ENCODE measurements at regions of chr12 and their contacts with region 1.

Region 1: DNA sequence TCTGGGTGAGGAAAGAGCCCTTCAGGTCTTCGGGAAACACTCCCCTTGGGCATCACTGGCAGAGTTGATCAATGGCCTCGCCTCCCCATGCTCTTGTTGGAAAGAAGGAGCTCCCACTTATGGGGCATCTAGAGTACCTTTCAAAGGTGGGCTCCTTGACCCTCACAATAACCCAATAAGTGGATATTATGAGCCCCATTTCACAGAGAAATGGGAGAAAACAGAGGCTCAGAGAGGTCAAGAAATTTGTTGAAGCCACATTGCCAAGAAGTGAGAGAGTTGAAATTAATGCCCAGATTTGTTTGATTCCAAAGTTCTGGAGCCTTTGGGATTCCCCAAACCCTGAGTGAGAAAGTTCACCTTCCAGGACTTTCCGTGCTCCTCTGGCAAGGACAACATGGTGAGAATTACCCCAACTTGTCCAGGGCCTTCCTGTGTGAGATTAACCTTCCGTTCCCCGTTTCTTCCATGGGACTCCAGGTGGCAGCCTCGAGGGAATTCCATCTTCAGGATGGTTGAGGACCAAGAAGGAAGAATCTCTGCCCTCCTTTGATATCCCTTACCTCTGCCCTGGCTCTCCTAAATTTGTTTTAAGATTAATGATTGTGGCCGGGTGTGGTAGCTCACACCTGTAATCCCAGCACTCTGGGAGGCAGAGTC is 7.5 kb upstream of the CHD4 start:
- DNase-seq: no peak
- H3K4me3 ChIP-seq: no peak overlapping the region
- CTCF ChIP-seq: no peak
- POLR2A ChIP-seq: no peak

Region 2: DNA sequence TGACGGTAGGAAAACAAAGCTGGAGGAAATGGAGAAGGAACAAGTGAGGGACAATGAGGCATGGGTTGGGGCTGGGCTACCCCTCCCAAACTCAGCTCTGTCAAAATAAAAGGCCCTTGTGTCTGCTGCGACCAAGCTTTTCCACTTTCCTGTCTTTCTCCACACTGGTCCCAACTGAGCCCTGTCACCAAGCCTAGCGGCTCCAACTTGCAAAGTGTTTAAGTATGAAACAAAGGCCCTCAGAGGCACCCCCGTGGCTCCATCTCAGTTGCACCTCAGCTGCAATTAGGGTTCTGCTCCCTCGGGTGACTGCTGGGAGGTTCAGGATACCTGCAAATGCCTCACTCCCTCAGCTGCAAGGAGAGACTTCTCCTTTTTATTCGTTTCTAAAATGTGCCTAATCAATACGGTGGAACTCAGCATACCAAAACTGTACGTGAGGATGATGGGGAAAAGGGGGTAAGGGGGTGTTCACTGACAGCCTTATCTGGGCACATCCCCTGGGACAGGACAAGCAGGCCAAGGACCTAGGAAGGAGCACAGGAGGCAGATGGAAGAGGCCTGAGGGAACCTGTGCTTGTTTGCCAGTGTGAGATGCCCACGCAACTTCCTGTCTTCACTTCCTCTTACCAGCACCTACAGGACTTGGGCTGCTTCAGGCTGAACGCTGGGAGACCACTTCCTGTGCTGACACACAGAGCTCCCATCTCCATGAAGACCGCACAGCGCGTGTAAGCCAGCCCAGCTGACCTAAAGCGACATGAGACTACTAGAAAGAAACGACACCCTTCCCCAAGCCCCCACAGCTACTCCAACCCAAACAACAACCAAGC is 153.0 kb before region 1 on chr12:
- intact Hi-C with region 1: no loop called
- DNase-seq: peak; percentile 49 to 87
- H3K4me3 ChIP-seq: no peak overlapping the region
- CTCF ChIP-seq: no peak
- POLR2A ChIP-seq: no peak

Region 3: GRCh38 chr12:6507102-6507998 is 107.3 kb before region 1 on chr12:
- intact Hi-C with region 1: no loop called
- DNase-seq: no peak
- H3K4me3 ChIP-seq: no peak overlapping the region
- CTCF ChIP-seq: no peak
- POLR2A ChIP-seq: no peak

Region 4: GRCh38 chr12:6825398-6826124 is 210.9 kb after region 1 on chr12:
- intact Hi-C with region 1: loop called (anchors 5 kb)
- DNase-seq: peak; percentile 80 to 97
- H3K4me3 ChIP-seq: no peak overlapping the region
- CTCF ChIP-seq: peak in 1 of 3 donors; percentile 75
- POLR2A ChIP-seq: no peak

Measured in lower leg skin (tissue), 4 donors.